ENCODE measurements at regions of chr16 and their contacts with region 1.

Region 1: GRCh38 chr16:81696961-81697615 is 82.0 kb upstream of the PLCG2 start:
- DNase-seq: peak; percentile 51 to 55
- ATAC-seq: peak in 7 of 8 donors; percentile 24 to 59 (median 47)
- H3K4me3 ChIP-seq: no peak overlapping the region
- H3K27ac ChIP-seq: peak overlapping the region in 4 of 10 donors; percentile 30 to 61 (median 50)
- H3K4me1 ChIP-seq: peaks cover 0 to 58% (median 23%) of the 10 kb centered on the region in 9 donors
- H3K27me3 ChIP-seq: no peaks in the 10 kb centered on the region
- CTCF ChIP-seq: peak in 8 of 9 donors; percentile 47 to 72 (median 65)

Region 2: DNA sequence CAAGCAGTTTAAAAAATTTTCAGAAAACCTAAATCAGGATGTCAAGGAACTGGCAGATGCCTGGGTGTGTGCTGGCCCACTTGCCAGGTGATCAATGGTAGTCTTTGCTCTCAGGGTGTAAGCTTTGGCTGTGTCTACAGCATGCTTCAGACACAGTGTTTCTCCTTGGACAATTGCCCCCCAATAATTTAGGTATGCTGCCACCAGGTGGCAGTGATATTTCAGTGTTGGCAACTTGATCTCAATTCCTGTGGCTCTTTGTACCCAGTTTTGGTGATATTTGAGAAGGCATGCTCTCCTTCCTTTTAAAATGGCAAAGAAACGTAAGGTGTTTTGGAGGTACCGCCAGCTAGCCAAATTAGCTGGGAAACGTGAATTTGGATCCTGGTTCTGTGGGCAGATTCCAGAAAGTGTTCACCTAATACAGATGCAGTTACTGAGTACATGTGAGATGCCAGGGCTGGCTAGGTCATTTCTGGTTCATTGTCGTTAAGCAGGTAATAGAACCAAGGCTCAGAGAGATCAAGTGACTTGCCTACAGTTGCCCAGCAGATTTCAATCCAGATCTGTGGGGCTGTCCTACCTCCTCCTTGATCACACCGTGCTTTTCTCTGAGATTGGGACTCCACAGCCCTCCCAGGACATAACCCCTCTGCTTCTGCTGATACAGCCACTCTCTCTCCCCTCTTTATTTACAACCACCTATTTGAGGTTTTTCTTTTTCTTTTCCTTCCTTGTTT is 73.6 kb before region 1 on chr16:
- intact Hi-C with region 1: loop called in 2 of 10 experiments (anchors 5 kb)
- DNase-seq: no peak
- ATAC-seq: peak in 1 of 8 donors; percentile 19
- H3K4me3 ChIP-seq: no peak overlapping the region
- H3K27ac ChIP-seq: peak overlapping the region in 1 of 10 donors; percentile 12
- H3K4me1 ChIP-seq: peaks cover 0 to 25% (median 13%) of the 10 kb centered on the region in 9 donors
- H3K27me3 ChIP-seq: no peaks in the 10 kb centered on the region
- CTCF ChIP-seq: peak in 8 of 9 donors; percentile 34 to 73 (median 61)